Activated naive CD4-positive, alpha-beta T cell treated with anti-CD3 and anti-CD28 coated beads for 36 hours (primary cell): ENCODE measurements at regions of chr17 and their contacts with region 1.

Region 1: DNA sequence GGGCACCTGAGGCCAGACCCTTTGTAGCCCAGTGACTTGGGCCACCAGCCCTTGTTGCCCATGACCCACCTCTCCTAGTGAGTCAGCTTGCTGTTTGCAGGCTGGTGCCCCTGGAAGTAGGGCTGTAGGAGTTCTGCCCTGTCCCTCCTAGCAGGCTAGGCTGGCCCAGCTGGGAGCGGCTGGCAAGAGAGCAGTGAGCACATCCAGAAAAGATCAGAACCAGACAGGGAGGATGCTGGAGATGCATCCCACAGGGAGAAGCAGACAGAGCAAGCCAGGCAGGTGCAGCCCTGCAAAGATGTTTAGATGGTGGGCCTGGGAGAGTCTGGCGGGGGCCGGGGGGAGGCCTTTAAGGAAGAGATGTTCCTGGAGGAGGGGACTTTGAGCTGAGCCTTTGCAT is 2.4 kb downstream of the SLC5A10 start:
- DNase-seq: no peak
- H3K4me3 Mint-ChIP-seq: no peak overlapping the region
- H3K27ac Mint-ChIP-seq: no peak overlapping the region
- H3K4me1 Mint-ChIP-seq: peaks cover 31% of the 10 kb centered on the region
- H3K27me3 Mint-ChIP-seq: no peaks in the 10 kb centered on the region

Region 2: DNA sequence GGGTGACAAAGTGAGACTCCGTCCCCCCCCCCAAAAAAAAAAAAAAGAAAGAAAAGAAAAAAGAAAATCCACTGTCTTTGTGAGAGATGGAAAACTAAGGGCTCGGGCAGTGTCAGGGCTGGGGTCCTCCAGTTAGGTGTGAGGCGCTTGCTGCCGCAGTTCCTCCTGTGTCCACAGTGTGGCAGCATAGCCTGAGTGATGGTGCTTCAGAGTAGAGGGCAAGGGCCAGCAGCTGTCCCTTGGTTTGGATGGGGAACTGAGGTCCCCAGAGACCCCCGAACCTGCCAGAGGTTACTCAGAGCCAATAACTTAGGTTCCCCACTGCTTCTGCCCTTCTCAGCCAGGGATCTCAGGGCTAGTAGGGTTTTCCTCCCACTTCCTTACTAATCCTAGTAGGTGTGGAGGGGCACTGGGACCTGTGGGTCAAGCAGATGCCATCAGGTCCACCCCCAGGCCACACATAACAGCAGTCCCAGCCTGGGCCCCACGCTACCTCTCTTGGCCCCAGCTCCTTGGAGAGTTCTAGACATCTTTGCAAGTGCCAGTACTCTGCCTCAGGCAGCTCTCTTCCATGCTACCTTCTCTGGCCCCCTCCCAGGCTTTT is 736.8 kb before region 1 on chr17:
- CTCF ChIA-PET with region 1: no interaction called
- intact Hi-C with region 1: no loop called
- DNase-seq: peak; percentile 87
- H3K4me3 Mint-ChIP-seq: no peak overlapping the region
- H3K27ac Mint-ChIP-seq: no peak overlapping the region
- H3K4me1 Mint-ChIP-seq: no peaks in the 10 kb centered on the region
- H3K27me3 Mint-ChIP-seq: no peaks in the 10 kb centered on the region

Region 3: DNA sequence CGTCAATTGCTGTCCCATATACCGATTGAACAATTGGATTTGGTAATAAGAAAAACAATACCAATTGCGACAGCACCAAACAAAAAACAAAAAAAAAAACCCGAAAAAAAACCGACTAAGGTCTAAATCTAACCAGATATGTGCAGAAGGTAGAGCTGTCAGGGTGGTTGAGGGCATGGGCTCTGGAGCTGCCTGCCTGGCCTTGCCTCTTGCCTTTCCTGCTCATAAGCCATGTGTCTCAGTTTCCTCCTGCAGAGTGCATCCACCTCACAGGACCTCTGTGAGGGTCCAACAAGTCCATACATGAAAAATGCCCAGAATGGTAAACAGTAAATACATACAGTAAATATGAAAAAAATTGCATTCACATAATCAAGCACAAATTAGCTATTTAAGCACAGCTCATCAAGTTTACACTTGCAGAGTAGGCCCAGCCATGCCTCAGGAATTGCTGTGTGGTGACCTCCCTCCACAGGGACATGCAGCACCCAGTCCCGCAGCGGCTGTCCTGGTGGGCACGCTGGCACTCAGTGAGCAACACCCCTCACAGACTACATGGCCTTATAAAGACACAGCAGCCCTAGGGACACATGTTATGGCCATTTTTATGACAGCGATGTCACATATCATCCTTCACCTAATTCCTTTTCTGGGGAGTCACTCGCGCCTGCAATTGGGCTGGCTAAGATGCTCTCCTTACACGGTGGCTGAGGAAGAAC is 328.0 kb before region 1 on chr17:
- CTCF ChIA-PET with region 1: interaction called, 11 read pairs
- intact Hi-C with region 1: no loop called
- DNase-seq: no peak
- H3K4me3 Mint-ChIP-seq: no peak overlapping the region
- H3K27ac Mint-ChIP-seq: no peak overlapping the region
- H3K4me1 Mint-ChIP-seq: peaks cover 5% of the 10 kb centered on the region
- H3K27me3 Mint-ChIP-seq: no peaks in the 10 kb centered on the region

Region 4: DNA sequence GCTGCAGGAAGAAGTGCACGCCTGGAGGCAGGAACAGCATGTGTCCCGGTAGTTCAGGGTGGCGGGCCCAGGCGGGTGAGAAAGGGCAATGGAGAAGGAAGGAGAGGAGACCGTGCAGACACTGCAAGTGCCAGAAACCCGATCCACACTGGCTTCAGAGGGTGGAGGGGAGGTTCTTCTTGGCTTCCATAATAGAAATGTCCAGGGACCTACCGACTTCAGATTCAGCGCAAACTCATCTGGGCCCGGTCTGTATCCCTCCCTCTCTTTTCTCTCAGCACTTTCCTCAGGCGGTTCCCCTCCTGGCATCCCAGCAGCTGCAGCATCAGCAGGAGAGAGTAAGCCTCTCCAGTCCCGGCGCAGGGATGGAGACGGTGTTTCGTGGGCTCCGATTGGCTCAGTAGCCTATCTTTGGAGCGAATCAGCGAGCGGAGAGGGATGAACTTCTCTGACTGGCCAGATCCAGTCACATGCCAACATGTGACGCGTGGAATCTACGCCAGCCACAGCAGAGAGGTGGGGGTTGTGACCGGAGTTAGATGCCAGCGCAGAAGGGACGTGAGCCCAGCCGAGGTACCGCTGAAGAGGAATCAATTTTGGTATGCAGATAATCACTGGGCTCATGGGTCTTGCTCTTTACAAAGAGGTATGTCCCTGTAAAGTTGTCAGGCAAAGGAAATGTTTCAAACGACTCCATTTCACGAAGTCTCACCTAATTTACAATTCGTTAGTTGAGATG is 98.3 kb before region 1 on chr17:
- CTCF ChIA-PET with region 1: interaction called, 3 read pairs
- intact Hi-C with region 1: loop called (anchors 1 kb)
- DNase-seq: peak; percentile 95
- H3K4me3 Mint-ChIP-seq: peak overlapping the region; percentile 86
- H3K27ac Mint-ChIP-seq: peak overlapping the region; percentile 73
- H3K4me1 Mint-ChIP-seq: peaks cover 38% of the 10 kb centered on the region
- H3K27me3 Mint-ChIP-seq: no peaks in the 10 kb centered on the region

Region 5: GRCh38 chr17:18970559-18971480 is 16.5 kb after region 1 on chr17:
- CTCF ChIA-PET with region 1: interaction called, 3 read pairs
- intact Hi-C with region 1: loop called (anchors 2 kb)
- DNase-seq: no peak
- H3K4me3 Mint-ChIP-seq: no peak overlapping the region
- H3K27ac Mint-ChIP-seq: no peak overlapping the region
- H3K4me1 Mint-ChIP-seq: peaks cover 11% of the 10 kb centered on the region
- H3K27me3 Mint-ChIP-seq: no peaks in the 10 kb centered on the region

Region 6: GRCh38 chr17:19004421-19005136 is 50.3 kb after region 1 on chr17 and contains the start of gene FAM83G:
- CTCF ChIA-PET with region 1: interaction called, 3 read pairs
- intact Hi-C with region 1: loop called (anchors 1 kb)
- DNase-seq: peak; percentile 92
- H3K4me3 Mint-ChIP-seq: peak within 1 kb of the TSS; percentile 91
- H3K27ac Mint-ChIP-seq: peak within 1 kb of the TSS; percentile 87
- H3K4me1 Mint-ChIP-seq: peaks cover 31% of the 10 kb centered on the region
- H3K27me3 Mint-ChIP-seq: no peaks in the 10 kb centered on the region
- total RNA-seq, gene FAM83G: 10.6 TPM

Region 7: GRCh38 chr17:19306160-19307111 is 352.1 kb after region 1 on chr17:
- CTCF ChIA-PET with region 1: no interaction called
- intact Hi-C with region 1: no loop called
- DNase-seq: peak; percentile 65
- H3K4me3 Mint-ChIP-seq: no peak overlapping the region
- H3K27ac Mint-ChIP-seq: no peak overlapping the region
- H3K4me1 Mint-ChIP-seq: peaks cover 23% of the 10 kb centered on the region
- H3K27me3 Mint-ChIP-seq: peaks cover 40% of the 10 kb centered on the region